CD4-positive, alpha-beta T cell (primary cell): ENCODE measurements at regions of chr7 and their contacts with region 1.

Region 1: GRCh38 chr7:6706677-6707544 is at the start of gene ZNF12:
- DNase-seq: peak; percentile 89 to 98 (median 94)
- ATAC-seq: peak; percentile 81
- H3K4me3 ChIP-seq: peak within 1 kb of the TSS; percentile 95
- H3K4me3 Mint-ChIP-seq: peak within 1 kb of the TSS; percentile 95
- H3K27ac ChIP-seq: peak within 1 kb of the TSS; percentile 61 to 82
- H3K27ac Mint-ChIP-seq: peak within 1 kb of the TSS; percentile 87
- H3K4me1 ChIP-seq: peaks cover 40% of the 10 kb centered on the region
- H3K4me1 Mint-ChIP-seq: peaks cover 42% of the 10 kb centered on the region
- H3K27me3 ChIP-seq: no peaks in the 10 kb centered on the region
- H3K27me3 Mint-ChIP-seq: no peaks in the 10 kb centered on the region
- CTCF ChIP-seq: no peak
- total RNA-seq, gene ZNF12: 22.1 to 22.5 TPM

Region 2: DNA sequence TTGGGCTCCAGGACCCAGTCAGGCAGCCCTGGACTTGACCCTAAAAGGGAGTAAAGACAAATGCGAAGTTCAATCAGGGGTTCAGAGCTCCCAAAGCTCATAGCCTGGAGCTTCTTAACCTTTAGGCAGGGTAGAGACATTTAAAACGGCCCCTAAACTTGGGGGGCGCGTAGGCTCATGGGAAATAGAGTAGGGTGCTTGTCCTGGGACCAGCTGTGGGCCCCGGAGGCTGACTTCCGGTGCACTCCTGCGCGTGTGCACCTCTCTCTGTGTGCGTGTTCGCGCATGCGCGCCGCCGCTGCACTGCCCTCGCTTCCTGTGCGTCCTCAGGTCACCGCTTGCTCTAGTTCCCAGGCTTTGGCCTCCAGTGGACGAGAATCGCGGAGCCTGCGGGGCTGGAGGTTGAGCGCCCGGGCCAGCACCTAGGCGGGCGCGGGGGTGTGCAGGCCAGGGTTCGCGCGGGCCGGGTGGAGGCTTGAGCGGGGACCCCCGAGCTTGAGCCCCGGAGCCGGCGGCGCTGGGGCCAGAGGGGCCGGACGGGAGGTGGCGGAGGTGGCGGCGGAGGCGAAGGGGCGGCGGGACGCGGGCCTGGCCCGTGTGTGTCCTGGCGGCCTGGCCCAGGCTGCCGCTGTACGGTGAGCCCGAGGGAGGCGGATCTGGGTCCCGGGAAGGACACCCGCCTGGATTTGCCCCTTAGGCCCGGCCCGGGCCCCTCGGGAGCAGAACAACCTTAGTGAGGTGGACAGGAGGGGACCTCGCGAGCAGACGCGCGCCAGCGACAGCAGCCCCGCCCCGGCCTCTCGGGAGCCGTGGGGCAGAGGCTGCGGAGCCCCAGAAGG is 1661.1 kb before region 1 on chr7 and contains the start of gene RBAK:
- CTCF ChIA-PET with region 1: no interaction called
- POLR2A ChIA-PET with region 1: no interaction called
- intact Hi-C with region 1: loop called in 1 of 2 experiments (anchors 10 kb)
- DNase-seq: peak; percentile 74 to 96 (median 87)
- ATAC-seq: peak; percentile 99
- H3K4me3 ChIP-seq: peak within 1 kb of the TSS; percentile 80
- H3K4me3 Mint-ChIP-seq: peak within 1 kb of the TSS; percentile 95
- H3K27ac ChIP-seq: peak within 1 kb of the TSS; percentile 9 to 68
- H3K27ac Mint-ChIP-seq: peak within 1 kb of the TSS; percentile 82
- H3K4me1 ChIP-seq: peaks cover 26% of the 10 kb centered on the region
- H3K4me1 Mint-ChIP-seq: peaks cover 44% of the 10 kb centered on the region
- H3K27me3 ChIP-seq: no peaks in the 10 kb centered on the region
- H3K27me3 Mint-ChIP-seq: no peaks in the 10 kb centered on the region
- CTCF ChIP-seq: no peak
- total RNA-seq, gene RBAK: 11.0 to 12.4 TPM

Region 3: GRCh38 chr7:5428478-5429252 is 1278.2 kb before region 1 on chr7:
- CTCF ChIA-PET with region 1: no interaction called
- POLR2A ChIA-PET with region 1: no interaction called
- intact Hi-C with region 1: no loop called
- DNase-seq: peak in 2 of 14 experiments; percentile 27 to 41
- ATAC-seq: no peak
- H3K4me3 ChIP-seq: no peak overlapping the region
- H3K4me3 Mint-ChIP-seq: no peak overlapping the region
- H3K27ac ChIP-seq: no peak overlapping the region
- H3K27ac Mint-ChIP-seq: no peak overlapping the region
- H3K4me1 ChIP-seq: peaks cover 61% of the 10 kb centered on the region
- H3K4me1 Mint-ChIP-seq: peaks cover 29% of the 10 kb centered on the region
- H3K27me3 ChIP-seq: peaks cover 74 to 79% of the 10 kb centered on the region in 2 experiments
- H3K27me3 Mint-ChIP-seq: peaks cover 85% of the 10 kb centered on the region
- CTCF ChIP-seq: no peak

Region 4: GRCh38 chr7:6577365-6578113 is 129.4 kb before region 1 on chr7 and contains the start of gene ZDHHC4:
- CTCF ChIA-PET with region 1: no interaction called
- POLR2A ChIA-PET with region 1: no interaction called
- intact Hi-C with region 1: loop called in 1 of 2 experiments (anchors 5 kb)
- DNase-seq: peak; percentile 65 to 94 (median 82)
- ATAC-seq: peak; percentile 92
- H3K4me3 ChIP-seq: peak within 1 kb of the TSS; percentile 83
- H3K4me3 Mint-ChIP-seq: peak within 1 kb of the TSS; percentile 93
- H3K27ac ChIP-seq: peak within 1 kb of the TSS; percentile 89 to 95
- H3K27ac Mint-ChIP-seq: peak within 1 kb of the TSS; percentile 88
- H3K4me1 ChIP-seq: peaks cover 17% of the 10 kb centered on the region
- H3K4me1 Mint-ChIP-seq: peaks cover 14% of the 10 kb centered on the region
- H3K27me3 ChIP-seq: no peaks in the 10 kb centered on the region
- H3K27me3 Mint-ChIP-seq: no peaks in the 10 kb centered on the region
- CTCF ChIP-seq: no peak
- total RNA-seq, gene ZDHHC4: 32.1 to 32.9 TPM

Region 5: GRCh38 chr7:6589829-6590644 is 116.9 kb before region 1 on chr7 and contains the start of gene INTS15:
- CTCF ChIA-PET with region 1: interaction called, 6 read pairs
- POLR2A ChIA-PET with region 1: interaction called, 3 read pairs
- intact Hi-C with region 1: loop called in 1 of 2 experiments (anchors 5 kb)
- DNase-seq: peak; percentile 65 to 95 (median 78)
- ATAC-seq: peak; percentile 89
- H3K4me3 ChIP-seq: peak within 1 kb of the TSS; percentile 73
- H3K4me3 Mint-ChIP-seq: peak within 1 kb of the TSS; percentile 98
- H3K27ac ChIP-seq: peak within 1 kb of the TSS; percentile 55 to 59
- H3K27ac Mint-ChIP-seq: peak within 1 kb of the TSS; percentile 96
- H3K4me1 ChIP-seq: peaks cover 28% of the 10 kb centered on the region
- H3K4me1 Mint-ChIP-seq: peaks cover 12% of the 10 kb centered on the region
- H3K27me3 ChIP-seq: no peaks in the 10 kb centered on the region
- H3K27me3 Mint-ChIP-seq: no peaks in the 10 kb centered on the region
- CTCF ChIP-seq: peak; percentile 45
- total RNA-seq, gene INTS15: 39.3 to 41.8 TPM

Region 6: GRCh38 chr7:6729492-6730342 is 22.8 kb after region 1 on chr7:
- CTCF ChIA-PET with region 1: no interaction called
- POLR2A ChIA-PET with region 1: interaction called, 4 read pairs
- intact Hi-C with region 1: loop called in 1 of 2 experiments (anchors 1 kb)
- DNase-seq: peak; percentile 57 to 91 (median 76)
- ATAC-seq: peak; percentile 95
- H3K4me3 ChIP-seq: peak overlapping the region; percentile 90
- H3K4me3 Mint-ChIP-seq: peak overlapping the region; percentile 88
- H3K27ac ChIP-seq: peak overlapping the region; percentile 72 to 75
- H3K27ac Mint-ChIP-seq: peak overlapping the region; percentile 83
- H3K4me1 ChIP-seq: peaks cover 22% of the 10 kb centered on the region
- H3K4me1 Mint-ChIP-seq: peaks cover 21% of the 10 kb centered on the region
- H3K27me3 ChIP-seq: no peaks in the 10 kb centered on the region
- H3K27me3 Mint-ChIP-seq: no peaks in the 10 kb centered on the region
- CTCF ChIP-seq: no peak

Region 7: GRCh38 chr7:7566651-7567611 is 860.0 kb after region 1 on chr7 and contains the start of gene MIOS:
- CTCF ChIA-PET with region 1: no interaction called
- POLR2A ChIA-PET with region 1: no interaction called
- intact Hi-C with region 1: loop called in 1 of 2 experiments (anchors 5 kb)
- DNase-seq: peak; percentile 65 to 92 (median 77)
- ATAC-seq: peak; percentile 92
- H3K4me3 ChIP-seq: peak within 1 kb of the TSS; percentile 74
- H3K4me3 Mint-ChIP-seq: peak within 1 kb of the TSS; percentile 89
- H3K27ac ChIP-seq: peak within 1 kb of the TSS; percentile 71 to 75
- H3K27ac Mint-ChIP-seq: peak within 1 kb of the TSS; percentile 87
- H3K4me1 ChIP-seq: peaks cover 29% of the 10 kb centered on the region
- H3K4me1 Mint-ChIP-seq: peaks cover 38% of the 10 kb centered on the region
- H3K27me3 ChIP-seq: no peaks in the 10 kb centered on the region
- H3K27me3 Mint-ChIP-seq: no peaks in the 10 kb centered on the region
- CTCF ChIP-seq: no peak
- total RNA-seq, gene MIOS: 30.8 to 33.3 TPM